Sigmoid colon (tissue), 7 donors: ENCODE measurements at regions of chr7 and their contacts with region 1.

Region 1: GRCh38 chr7:158469396-158470051 is 118.1 kb downstream of the PTPRN2 start:
- DNase-seq: no peak
- H3K4me3 ChIP-seq: no peak overlapping the region
- H3K27ac ChIP-seq: peak overlapping the region in 3 of 4 donors; percentile 73 to 85 (median 83)
- H3K4me1 ChIP-seq: peaks cover 0 to 45% (median 27%) of the 10 kb centered on the region in 4 donors
- H3K27me3 ChIP-seq: no peaks in the 10 kb centered on the region
- CTCF ChIP-seq: no peak
- EP300 ChIP-seq: peak; percentile 78 to 98 (median 84)
- POLR2A ChIP-seq: no peak

Region 2: GRCh38 chr7:158284121-158284520 is 185.4 kb before region 1 on chr7:
- intact Hi-C with region 1: no loop called
- DNase-seq: peak; percentile 40
- H3K4me3 ChIP-seq: no peak overlapping the region
- H3K27ac ChIP-seq: no peak overlapping the region
- H3K4me1 ChIP-seq: no peaks in the 10 kb centered on the region
- H3K27me3 ChIP-seq: no peaks in the 10 kb centered on the region
- CTCF ChIP-seq: no peak
- EP300 ChIP-seq: no peak
- POLR2A ChIP-seq: no peak

Region 3: DNA sequence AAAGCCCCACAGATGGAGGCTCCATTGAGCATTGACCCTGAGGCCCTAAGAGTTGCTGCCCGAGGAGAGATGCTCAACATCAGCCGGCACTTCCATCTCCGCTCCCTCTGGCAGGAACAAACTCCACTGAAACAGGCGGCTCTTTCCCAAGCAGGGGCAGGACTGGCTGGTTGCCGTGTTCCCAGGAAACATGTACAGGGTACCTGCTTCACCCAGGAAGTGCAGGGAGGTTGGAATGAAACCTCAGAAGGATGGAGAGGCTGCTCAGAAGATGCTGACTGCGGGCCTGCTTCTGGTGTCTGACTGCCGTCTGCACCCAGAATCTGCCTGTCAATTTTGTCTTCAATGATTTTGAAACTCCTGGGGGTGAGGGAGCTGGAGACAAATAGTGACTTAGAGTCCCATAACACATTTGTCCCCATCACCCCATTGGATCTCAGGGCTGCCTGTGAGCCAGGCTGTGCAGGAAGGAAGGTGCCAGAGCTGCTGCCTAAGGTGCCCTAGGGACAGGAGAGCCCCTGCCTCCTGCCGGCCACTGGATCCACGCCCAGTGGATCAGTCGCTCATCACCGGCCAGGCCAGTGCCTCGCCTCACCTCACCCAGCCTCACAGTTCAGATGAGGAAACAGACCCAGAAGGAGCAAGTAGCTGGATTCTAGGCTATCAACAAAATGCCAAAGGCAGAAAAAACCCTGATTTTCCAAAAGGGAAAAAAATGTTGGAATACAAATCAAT is 119.2 kb before region 1 on chr7:
- intact Hi-C with region 1: no loop called
- DNase-seq: peak; percentile 38
- H3K4me3 ChIP-seq: no peak overlapping the region
- H3K27ac ChIP-seq: no peak overlapping the region
- H3K4me1 ChIP-seq: no peaks in the 10 kb centered on the region
- H3K27me3 ChIP-seq: no peaks in the 10 kb centered on the region
- CTCF ChIP-seq: no peak
- EP300 ChIP-seq: no peak
- POLR2A ChIP-seq: no peak

Region 4: GRCh38 chr7:158432369-158433341 is 36.9 kb before region 1 on chr7:
- intact Hi-C with region 1: loop called (anchors 1 kb)
- DNase-seq: peak; percentile 86
- H3K4me3 ChIP-seq: peak overlapping the region in 3 of 4 donors; percentile 2 to 29 (median 20)
- H3K27ac ChIP-seq: peak overlapping the region; percentile 70 to 92 (median 86)
- H3K4me1 ChIP-seq: peaks cover 0 to 26% (median 17%) of the 10 kb centered on the region in 4 donors
- H3K27me3 ChIP-seq: no peaks in the 10 kb centered on the region
- CTCF ChIP-seq: no peak
- EP300 ChIP-seq: peak; percentile 87 to 99 (median 94)
- POLR2A ChIP-seq: no peak

Region 5: DNA sequence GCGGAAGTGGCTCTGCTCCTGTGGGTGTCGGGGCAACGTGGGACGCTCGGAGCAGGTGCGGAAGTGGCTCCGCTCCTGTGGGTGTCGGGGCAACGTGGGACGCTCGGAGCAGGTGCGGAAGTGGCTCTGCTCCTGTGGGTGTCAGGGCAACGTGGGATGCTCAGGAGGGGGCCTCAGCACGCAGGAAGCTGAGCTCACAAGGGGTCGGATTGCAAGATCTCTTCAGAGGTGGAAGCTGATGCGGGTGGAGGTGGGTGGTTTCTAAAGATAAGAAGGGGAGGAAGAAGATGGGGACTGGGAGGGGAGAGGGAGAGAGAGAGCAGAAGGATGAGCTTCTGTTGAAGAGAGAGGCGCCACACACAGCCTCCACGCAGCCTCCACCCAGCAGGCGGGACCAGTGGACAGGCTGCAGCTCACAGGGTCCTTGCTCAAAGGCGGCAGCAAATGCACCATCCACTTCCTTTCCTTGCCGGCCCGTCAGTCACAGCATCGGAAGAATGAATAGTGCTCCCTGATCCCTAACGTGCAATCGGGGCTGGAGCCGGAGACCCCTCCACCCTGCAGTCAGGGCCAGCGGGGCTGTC is 39.4 kb after region 1 on chr7:
- intact Hi-C with region 1: no loop called
- DNase-seq: no peak
- H3K4me3 ChIP-seq: no peak overlapping the region
- H3K27ac ChIP-seq: no peak overlapping the region
- H3K4me1 ChIP-seq: no peaks in the 10 kb centered on the region
- H3K27me3 ChIP-seq: peaks cover 0 to 3% (median 0%) of the 10 kb centered on the region in 3 donors
- CTCF ChIP-seq: no peak
- EP300 ChIP-seq: no peak
- POLR2A ChIP-seq: no peak